Naive thymus-derived CD4-positive, alpha-beta T cell (primary cell): ENCODE measurements at regions of chr6 and their contacts with region 1.

Region 1: DNA sequence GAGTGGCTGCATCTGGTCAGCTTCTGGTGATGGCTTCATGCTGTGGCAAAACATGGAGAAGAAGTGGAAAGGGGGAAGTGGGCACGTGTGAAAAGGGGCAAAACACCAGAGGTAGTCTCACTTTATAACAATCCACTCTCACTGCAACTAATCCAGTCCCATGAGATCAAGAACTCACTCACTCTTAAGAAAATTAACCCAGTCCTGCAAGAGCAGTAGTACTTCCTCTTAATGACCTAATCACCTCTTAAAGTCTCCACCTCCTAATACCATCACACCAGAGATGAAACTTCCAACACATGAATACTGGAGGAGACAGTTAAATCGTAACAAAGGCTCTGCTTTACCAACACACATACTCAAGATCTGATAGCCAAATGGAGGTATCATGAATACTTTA is 152.6 kb downstream of the THEMIS start:
- DNase-seq: no peak
- ATAC-seq: no peak
- H3K4me3 ChIP-seq: no peak overlapping the region
- H3K4me3 Mint-ChIP-seq: peak overlapping the region in 7 of 10 donors; percentile 2 to 45 (median 23)
- H3K27ac ChIP-seq: no peak overlapping the region
- H3K27ac Mint-ChIP-seq: peak overlapping the region; percentile 22 to 83 (median 62)
- H3K4me1 ChIP-seq: peaks cover 12 to 29% of the 10 kb centered on the region in 2 donors
- H3K4me1 Mint-ChIP-seq: peaks cover 19 to 81% (median 66%) of the 10 kb centered on the region in 7 donors
- H3K27me3 ChIP-seq: no peaks in the 10 kb centered on the region
- H3K27me3 Mint-ChIP-seq: no peaks in the 10 kb centered on the region

Region 2: GRCh38 chr6:127762284-127762683 is 14.0 kb after region 1 on chr6:
- CTCF ChIA-PET with region 1: no interaction called
- POLR2A ChIA-PET with region 1: interaction called, 3 read pairs
- intact Hi-C with region 1: loop called in 1 of 2 experiments (anchors 1 kb)
- DNase-seq: peak in 3 of 9 donors; percentile 9 to 19 (median 12)
- ATAC-seq: no peak
- H3K4me3 ChIP-seq: no peak overlapping the region
- H3K4me3 Mint-ChIP-seq: peak overlapping the region in 4 of 10 donors; percentile 20 to 52 (median 33)
- H3K27ac ChIP-seq: no peak overlapping the region
- H3K27ac Mint-ChIP-seq: peak overlapping the region in 7 of 9 donors; percentile 12 to 76 (median 46)
- H3K4me1 ChIP-seq: peaks cover 12 to 22% of the 10 kb centered on the region in 2 donors
- H3K4me1 Mint-ChIP-seq: peaks cover 23 to 71% (median 64%) of the 10 kb centered on the region in 7 donors
- H3K27me3 ChIP-seq: no peaks in the 10 kb centered on the region
- H3K27me3 Mint-ChIP-seq: no peaks in the 10 kb centered on the region

Region 3: DNA sequence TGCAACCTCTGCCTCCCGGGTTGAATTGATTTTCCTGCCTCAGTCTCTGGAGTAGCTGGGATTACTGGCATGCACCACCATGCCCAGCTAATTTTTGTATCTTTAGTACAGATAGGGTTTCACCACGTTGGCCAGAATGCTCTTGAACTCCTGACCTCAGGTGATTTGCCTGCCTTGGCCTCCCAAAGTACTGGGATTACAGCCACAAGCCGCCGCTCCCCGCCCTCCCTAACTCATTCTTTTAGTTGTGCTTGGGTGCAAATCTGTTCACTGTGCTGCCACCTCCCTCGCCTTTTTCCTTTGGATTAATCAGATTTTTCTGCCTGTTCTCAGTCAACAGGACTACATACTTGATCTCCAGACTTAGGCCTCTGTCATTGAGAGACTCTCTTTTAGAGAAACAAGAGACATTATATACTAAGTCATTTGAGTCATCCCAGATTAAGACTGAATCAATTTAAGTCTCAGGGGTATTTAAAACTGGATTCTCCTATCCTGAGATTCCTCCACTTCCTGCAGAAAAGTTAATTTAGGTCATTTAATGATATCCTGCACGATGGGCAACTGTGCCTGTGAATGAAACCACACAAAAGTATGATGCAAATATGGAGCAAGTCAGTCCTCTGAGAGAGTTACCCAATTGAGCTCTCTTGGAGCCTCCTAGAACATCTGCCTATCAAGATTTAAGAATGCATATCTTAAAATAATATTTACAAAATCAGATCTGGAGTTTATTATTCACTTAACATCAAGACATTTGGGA is 288.7 kb after region 1 on chr6:
- CTCF ChIA-PET with region 1: no interaction called
- POLR2A ChIA-PET with region 1: no interaction called
- intact Hi-C with region 1: no loop called
- DNase-seq: no peak
- ATAC-seq: no peak
- H3K4me3 ChIP-seq: no peak overlapping the region
- H3K4me3 Mint-ChIP-seq: no peak overlapping the region
- H3K27ac ChIP-seq: no peak overlapping the region
- H3K27ac Mint-ChIP-seq: no peak overlapping the region
- H3K4me1 ChIP-seq: peaks cover 0 to 4% of the 10 kb centered on the region in 2 donors
- H3K4me1 Mint-ChIP-seq: peaks cover 3 to 39% (median 16%) of the 10 kb centered on the region in 7 donors
- H3K27me3 ChIP-seq: no peaks in the 10 kb centered on the region
- H3K27me3 Mint-ChIP-seq: no peaks in the 10 kb centered on the region